Caco-2 (cell line): ENCODE measurements at regions of chr7 and their contacts with region 1.

Region 1: GRCh38 chr7:13117103-13117502 is 429.7 kb downstream of the ARL4A start:
- DNase-seq: peak in 1 of 2 experiments; percentile 19
- H3K4me3 ChIP-seq: no peak overlapping the region
- H3K4me3 Mint-ChIP-seq: no peak overlapping the region
- H3K27ac Mint-ChIP-seq: peak overlapping the region; percentile 44
- H3K4me1 ChIP-seq: peaks cover 31% of the 10 kb centered on the region
- H3K4me1 Mint-ChIP-seq: peaks cover 27% of the 10 kb centered on the region
- H3K27me3 ChIP-seq: no peaks in the 10 kb centered on the region
- H3K27me3 Mint-ChIP-seq: no peaks in the 10 kb centered on the region
- CTCF ChIP-seq: peak; percentile 15 to 44

Region 2: GRCh38 chr7:12643644-12644043 is 473.5 kb before region 1 on chr7:
- CTCF ChIA-PET with region 1: no interaction called
- POLR2A ChIA-PET with region 1: no interaction called
- intact Hi-C with region 1: loop called (anchors 1 kb)
- DNase-seq: no peak
- H3K4me3 ChIP-seq: no peak overlapping the region
- H3K4me3 Mint-ChIP-seq: no peak overlapping the region
- H3K27ac Mint-ChIP-seq: no peak overlapping the region
- H3K4me1 ChIP-seq: peaks cover 23% of the 10 kb centered on the region
- H3K4me1 Mint-ChIP-seq: peaks cover 8% of the 10 kb centered on the region
- H3K27me3 ChIP-seq: no peaks in the 10 kb centered on the region
- H3K27me3 Mint-ChIP-seq: no peaks in the 10 kb centered on the region
- CTCF ChIP-seq: no peak

Region 3: GRCh38 chr7:12731214-12731656 is 385.9 kb before region 1 on chr7:
- CTCF ChIA-PET with region 1: no interaction called
- POLR2A ChIA-PET with region 1: no interaction called
- intact Hi-C with region 1: loop called (anchors 5 kb)
- DNase-seq: peak in 1 of 2 experiments; percentile 9
- H3K4me3 ChIP-seq: no peak overlapping the region
- H3K4me3 Mint-ChIP-seq: no peak overlapping the region
- H3K27ac Mint-ChIP-seq: no peak overlapping the region
- H3K4me1 ChIP-seq: peaks cover 8% of the 10 kb centered on the region; the same call in 1 of the 2 replicates
- H3K4me1 Mint-ChIP-seq: peaks cover 6% of the 10 kb centered on the region
- H3K27me3 ChIP-seq: no peaks in the 10 kb centered on the region
- H3K27me3 Mint-ChIP-seq: no peaks in the 10 kb centered on the region
- CTCF ChIP-seq: peak in 1 of 2 experiments; percentile 13

Region 4: DNA sequence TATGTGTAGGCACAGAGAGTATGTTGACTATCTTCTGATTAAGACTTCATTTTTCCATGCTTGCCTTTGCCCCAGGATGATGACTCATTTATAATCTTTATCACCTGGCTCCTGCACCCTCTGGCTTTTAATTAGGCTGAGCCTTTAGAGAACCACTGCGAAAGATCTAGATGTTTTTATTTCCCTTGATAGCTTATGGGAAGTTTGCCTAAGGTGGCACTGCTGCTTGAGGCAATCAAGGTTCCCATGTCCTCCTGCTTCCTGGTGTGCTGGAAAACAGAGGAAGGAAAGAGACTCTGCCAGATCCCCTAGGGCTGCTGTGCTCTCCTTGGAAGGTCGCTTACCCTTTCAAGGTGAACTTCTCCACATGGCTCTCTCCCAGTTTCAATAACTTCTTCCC is 315.0 kb before region 1 on chr7:
- CTCF ChIA-PET with region 1: no interaction called
- POLR2A ChIA-PET with region 1: no interaction called
- intact Hi-C with region 1: loop called (anchors 5 kb)
- DNase-seq: peak in 1 of 2 experiments; percentile 10
- H3K4me3 ChIP-seq: no peak overlapping the region
- H3K4me3 Mint-ChIP-seq: peak overlapping the region; percentile 4
- H3K27ac Mint-ChIP-seq: peak overlapping the region; percentile 71
- H3K4me1 ChIP-seq: peaks cover 44% of the 10 kb centered on the region
- H3K4me1 Mint-ChIP-seq: peaks cover 33% of the 10 kb centered on the region
- H3K27me3 ChIP-seq: no peaks in the 10 kb centered on the region
- H3K27me3 Mint-ChIP-seq: no peaks in the 10 kb centered on the region
- CTCF ChIP-seq: no peak

Region 5: GRCh38 chr7:12821746-12822145 is 295.4 kb before region 1 on chr7:
- CTCF ChIA-PET with region 1: no interaction called
- POLR2A ChIA-PET with region 1: no interaction called
- intact Hi-C with region 1: loop called (anchors 5 kb)
- DNase-seq: no peak
- H3K4me3 ChIP-seq: no peak overlapping the region
- H3K4me3 Mint-ChIP-seq: no peak overlapping the region
- H3K27ac Mint-ChIP-seq: no peak overlapping the region
- H3K4me1 ChIP-seq: no peaks in the 10 kb centered on the region; the same call in 1 of the 2 replicates
- H3K4me1 Mint-ChIP-seq: peaks cover 16% of the 10 kb centered on the region
- H3K27me3 ChIP-seq: no peaks in the 10 kb centered on the region
- H3K27me3 Mint-ChIP-seq: no peaks in the 10 kb centered on the region
- CTCF ChIP-seq: no peak

Region 6: GRCh38 chr7:12929476-12930140 is 187.5 kb before region 1 on chr7:
- CTCF ChIA-PET with region 1: no interaction called
- POLR2A ChIA-PET with region 1: interaction called, 4 read pairs
- intact Hi-C with region 1: loop called (anchors 5 kb)
- DNase-seq: no peak
- H3K4me3 ChIP-seq: no peak overlapping the region
- H3K4me3 Mint-ChIP-seq: peak overlapping the region; percentile 90
- H3K27ac Mint-ChIP-seq: peak overlapping the region; percentile 85
- H3K4me1 ChIP-seq: peaks cover 42% of the 10 kb centered on the region
- H3K4me1 Mint-ChIP-seq: peaks cover 37% of the 10 kb centered on the region
- H3K27me3 ChIP-seq: no peaks in the 10 kb centered on the region
- H3K27me3 Mint-ChIP-seq: no peaks in the 10 kb centered on the region
- CTCF ChIP-seq: no peak

Region 7: DNA sequence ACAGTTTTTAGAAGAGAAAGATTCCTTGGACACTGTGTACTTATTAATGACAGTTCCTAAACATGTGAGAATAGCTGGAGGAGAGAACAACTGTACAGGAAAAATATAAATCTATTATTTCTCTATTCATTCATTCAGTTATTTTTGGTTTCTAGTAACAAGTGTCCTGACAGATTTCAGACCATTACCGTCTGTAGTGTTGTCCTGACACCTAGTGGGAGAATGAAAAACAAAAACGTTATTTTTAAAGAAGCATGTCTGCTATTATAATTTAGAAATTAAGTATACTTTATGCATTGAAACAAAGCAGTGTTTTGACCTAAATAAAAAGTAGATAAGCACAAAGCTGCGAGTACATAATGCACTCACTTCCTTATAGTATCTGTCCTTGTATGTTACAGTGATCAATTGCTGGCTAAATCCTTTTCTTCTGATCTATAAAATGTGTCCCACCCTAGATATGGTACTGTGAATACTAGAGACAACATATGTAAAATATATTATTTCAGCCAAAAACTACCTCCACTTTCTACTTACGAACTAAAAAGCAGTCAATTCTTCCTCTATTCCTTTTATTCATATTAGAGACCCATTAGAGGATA is 145.9 kb after region 1 on chr7:
- CTCF ChIA-PET with region 1: no interaction called
- POLR2A ChIA-PET with region 1: no interaction called
- intact Hi-C with region 1: loop called (anchors 5 kb)
- DNase-seq: peak in 1 of 2 experiments; percentile 40
- H3K4me3 ChIP-seq: no peak overlapping the region
- H3K4me3 Mint-ChIP-seq: no peak overlapping the region
- H3K27ac Mint-ChIP-seq: no peak overlapping the region
- H3K4me1 ChIP-seq: no peaks in the 10 kb centered on the region
- H3K4me1 Mint-ChIP-seq: no peaks in the 10 kb centered on the region
- H3K27me3 ChIP-seq: no peaks in the 10 kb centered on the region
- H3K27me3 Mint-ChIP-seq: no peaks in the 10 kb centered on the region
- CTCF ChIP-seq: peak; percentile 43 to 54